Activated CD8-positive, alpha-beta T cell treated with anti-CD3 and anti-CD28 coated beads for 36 hours (primary cell): ENCODE measurements at regions of chr11 and their contacts with region 1.

Region 1: DNA sequence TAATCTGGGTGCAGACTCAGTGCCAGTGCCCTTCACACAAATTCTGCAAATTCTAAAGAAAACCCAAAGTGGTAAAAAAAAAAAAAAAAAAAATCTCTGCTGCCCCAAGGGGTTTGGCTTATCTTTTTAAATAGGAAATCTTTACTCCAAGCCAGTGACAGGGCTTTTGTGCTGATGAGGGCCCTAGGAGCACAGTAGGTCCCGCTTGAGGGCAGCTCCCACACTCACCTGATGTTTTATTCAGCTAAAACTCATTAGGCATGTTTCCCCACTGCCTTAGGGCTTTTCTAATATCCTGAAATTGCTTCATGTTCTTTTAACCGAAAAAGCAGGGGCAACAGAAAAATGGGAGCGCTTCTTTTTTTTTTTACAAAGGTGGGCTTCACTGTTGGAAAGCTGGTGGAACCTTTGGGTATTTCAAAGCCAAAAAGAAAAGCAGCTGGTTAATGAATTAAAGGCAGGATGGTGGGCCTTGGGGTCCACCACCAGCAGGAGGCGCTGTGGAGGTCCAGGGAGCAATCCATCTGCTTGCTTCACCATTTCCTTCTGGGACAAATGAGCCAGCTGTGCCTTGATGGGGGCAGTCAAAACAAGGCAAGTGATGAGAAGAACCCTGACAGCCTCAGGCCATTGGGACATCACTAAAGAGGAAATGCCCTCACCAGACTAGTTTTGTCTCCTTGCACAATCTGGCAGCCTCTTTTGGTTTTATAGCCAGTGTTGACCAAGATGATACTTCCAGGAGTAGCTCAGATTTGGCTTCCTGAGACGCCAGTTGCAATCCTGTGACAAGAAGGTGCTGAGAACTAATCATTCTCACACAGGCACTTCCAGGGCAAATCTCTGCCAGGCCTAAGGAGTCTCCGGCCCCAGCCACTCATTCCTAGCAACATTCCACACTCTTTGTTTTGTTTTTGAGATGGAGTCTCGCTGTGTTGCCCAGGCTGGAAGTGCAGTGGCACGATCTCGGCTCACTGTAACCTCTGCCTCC is 38.4 kb upstream of the WEE1 start:
- DNase-seq: peak; percentile 89
- ATAC-seq: peak; percentile 75
- H3K4me3 Mint-ChIP-seq: no peak overlapping the region
- H3K27ac Mint-ChIP-seq: no peak overlapping the region
- H3K4me1 Mint-ChIP-seq: no peaks in the 10 kb centered on the region
- H3K27me3 Mint-ChIP-seq: no peaks in the 10 kb centered on the region
- CTCF ChIP-seq: peak; percentile 83

Region 2: DNA sequence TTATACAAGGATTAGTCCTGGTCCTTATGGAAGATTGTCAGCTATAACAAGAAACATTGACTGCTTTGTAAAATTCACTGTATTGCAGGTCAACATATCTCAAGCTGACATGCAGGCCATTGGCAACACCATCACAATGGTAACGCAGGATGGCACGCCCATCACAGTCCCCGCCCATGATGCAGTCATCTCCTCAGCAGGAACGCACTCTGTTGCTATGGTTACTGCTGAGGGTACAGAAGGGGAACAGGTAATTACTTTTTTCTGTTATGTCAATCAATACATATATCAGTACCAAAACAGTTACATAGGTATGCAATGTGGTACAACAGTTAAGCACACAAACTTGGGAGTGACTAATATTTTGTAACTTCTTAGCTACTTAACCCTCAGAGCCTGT is 19.0 kb before region 1 on chr11:
- CTCF ChIA-PET with region 1: interaction called, 13 read pairs
- POLR2A ChIA-PET with region 1: interaction called, 3 read pairs
- intact Hi-C with region 1: no loop called
- DNase-seq: no peak
- ATAC-seq: no peak
- H3K4me3 Mint-ChIP-seq: no peak overlapping the region
- H3K27ac Mint-ChIP-seq: no peak overlapping the region
- H3K4me1 Mint-ChIP-seq: no peaks in the 10 kb centered on the region
- H3K27me3 Mint-ChIP-seq: no peaks in the 10 kb centered on the region
- CTCF ChIP-seq: no peak

Region 3: GRCh38 chr11:9565822-9566560 is 30.9 kb after region 1 on chr11:
- CTCF ChIA-PET with region 1: interaction called, 37 read pairs
- POLR2A ChIA-PET with region 1: no interaction called
- intact Hi-C with region 1: no loop called
- DNase-seq: peak; percentile 77
- ATAC-seq: peak; percentile 97
- H3K4me3 Mint-ChIP-seq: no peak overlapping the region
- H3K27ac Mint-ChIP-seq: peak overlapping the region; percentile 73
- H3K4me1 Mint-ChIP-seq: peaks cover 13% of the 10 kb centered on the region
- H3K27me3 Mint-ChIP-seq: peaks cover 3% of the 10 kb centered on the region
- CTCF ChIP-seq: no peak

Region 4: GRCh38 chr11:9601037-9601875 is 66.2 kb after region 1 on chr11:
- CTCF ChIA-PET with region 1: interaction called, 19 read pairs
- POLR2A ChIA-PET with region 1: no interaction called
- intact Hi-C with region 1: no loop called
- DNase-seq: peak; percentile 92
- ATAC-seq: peak; percentile 87
- H3K4me3 Mint-ChIP-seq: peak overlapping the region; percentile 60
- H3K27ac Mint-ChIP-seq: peak overlapping the region; percentile 87
- H3K4me1 Mint-ChIP-seq: peaks cover 31% of the 10 kb centered on the region
- H3K27me3 Mint-ChIP-seq: peaks cover 3% of the 10 kb centered on the region
- CTCF ChIP-seq: no peak

Region 5: GRCh38 chr11:9748361-9748970 is 213.4 kb after region 1 on chr11:
- CTCF ChIA-PET with region 1: interaction called, 68 read pairs
- POLR2A ChIA-PET with region 1: interaction called, 3 read pairs
- intact Hi-C with region 1: loop called (anchors 5 kb)
- DNase-seq: peak; percentile 79
- ATAC-seq: peak; percentile 98
- H3K4me3 Mint-ChIP-seq: no peak overlapping the region
- H3K27ac Mint-ChIP-seq: no peak overlapping the region
- H3K4me1 Mint-ChIP-seq: peaks cover 14% of the 10 kb centered on the region
- H3K27me3 Mint-ChIP-seq: no peaks in the 10 kb centered on the region
- CTCF ChIP-seq: peak; percentile 82

Region 6: DNA sequence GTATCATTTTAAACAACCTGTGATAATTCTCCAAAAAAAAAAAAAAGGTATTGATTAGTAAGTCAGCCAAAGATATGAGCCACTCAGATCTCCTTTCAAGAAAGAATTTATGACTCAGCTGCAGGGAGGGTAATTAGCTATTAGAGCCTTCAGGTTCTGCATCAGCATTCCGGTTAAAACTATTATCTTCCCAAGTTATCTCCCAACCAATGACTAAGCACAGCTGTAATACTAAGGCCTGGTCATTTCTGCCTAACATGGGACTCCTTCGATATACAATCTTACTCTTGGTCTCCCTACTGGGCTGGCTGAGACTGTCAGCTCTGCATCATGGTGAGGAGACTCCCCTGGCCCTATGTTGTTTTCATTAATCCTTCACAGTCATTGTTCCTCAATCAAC is 698.5 kb after region 1 on chr11:
- CTCF ChIA-PET with region 1: no interaction called
- POLR2A ChIA-PET with region 1: no interaction called
- intact Hi-C with region 1: no loop called
- DNase-seq: no peak
- ATAC-seq: no peak
- H3K4me3 Mint-ChIP-seq: no peak overlapping the region
- H3K27ac Mint-ChIP-seq: no peak overlapping the region
- H3K4me1 Mint-ChIP-seq: no peaks in the 10 kb centered on the region
- H3K27me3 Mint-ChIP-seq: no peaks in the 10 kb centered on the region
- CTCF ChIP-seq: no peak